Posterior cingulate gyrus (tissue), 11 donors: ENCODE measurements at regions of chr12 and their contacts with region 1.

Region 1: DNA sequence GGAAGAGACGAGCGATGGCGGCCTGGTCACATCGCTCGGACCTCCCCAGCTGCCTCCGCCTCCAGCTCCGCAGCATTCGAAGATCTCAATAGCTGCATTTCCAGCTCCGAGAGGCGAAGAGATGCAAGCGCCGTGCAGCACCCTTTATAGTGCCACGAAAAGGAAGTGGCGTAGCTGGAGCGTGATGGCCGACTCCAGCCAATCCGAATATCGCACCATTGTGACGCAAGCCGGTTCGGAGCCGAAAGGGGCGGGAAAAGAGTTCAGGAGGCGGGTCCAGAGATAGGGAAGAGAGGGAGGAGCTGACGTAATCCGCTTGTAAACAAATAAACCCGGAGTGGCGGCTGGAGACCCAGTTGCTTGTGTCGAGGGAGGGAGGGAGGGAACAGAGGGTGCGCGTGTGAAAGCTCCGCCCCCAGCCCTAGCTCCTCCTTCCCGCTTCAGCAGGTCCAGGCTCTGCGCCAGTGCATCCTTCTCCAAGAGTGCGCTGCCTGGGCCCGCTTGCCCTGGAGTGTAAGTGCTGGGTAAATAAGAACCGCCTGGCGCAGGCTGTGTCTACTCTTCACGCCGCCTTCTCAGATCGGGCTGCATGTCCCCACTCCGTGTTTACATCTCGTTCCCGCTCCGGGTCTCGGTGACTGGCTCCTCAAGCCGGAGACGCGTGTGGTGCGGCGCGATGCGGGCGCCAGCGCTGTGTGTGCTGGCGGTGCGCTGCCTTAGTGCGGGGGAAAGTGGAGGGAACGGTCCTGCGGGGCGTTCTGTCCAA is at the start of gene BTG1:
- DNase-seq: peak; percentile 99 to 100 (median 99)

Region 2: DNA sequence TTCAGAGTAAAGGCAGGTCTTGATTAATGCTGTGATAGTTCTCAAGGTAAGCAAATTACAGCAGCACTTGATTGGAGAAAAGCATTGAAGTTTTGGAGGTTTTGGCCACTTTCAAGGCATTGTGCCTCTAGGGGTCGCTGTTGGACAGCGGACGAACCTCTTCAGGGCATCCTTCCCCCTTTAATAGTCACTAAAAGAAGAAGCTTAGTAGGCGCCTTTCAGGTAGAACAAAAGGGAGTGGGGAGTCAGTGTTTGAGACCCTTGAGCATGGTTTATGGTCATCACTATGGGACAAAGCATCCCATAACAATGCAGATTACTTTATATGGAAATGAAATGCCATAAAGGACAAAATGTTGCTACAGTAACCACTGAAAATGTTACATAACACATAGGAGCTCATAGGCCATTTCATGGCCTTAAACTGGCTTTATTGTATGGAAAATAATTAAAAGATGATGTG is 763.8 kb before region 1 on chr12:
- intact Hi-C with region 1: loop called (anchors 5 kb)
- DNase-seq: peak; percentile 71 to 97 (median 90)

Region 3: DNA sequence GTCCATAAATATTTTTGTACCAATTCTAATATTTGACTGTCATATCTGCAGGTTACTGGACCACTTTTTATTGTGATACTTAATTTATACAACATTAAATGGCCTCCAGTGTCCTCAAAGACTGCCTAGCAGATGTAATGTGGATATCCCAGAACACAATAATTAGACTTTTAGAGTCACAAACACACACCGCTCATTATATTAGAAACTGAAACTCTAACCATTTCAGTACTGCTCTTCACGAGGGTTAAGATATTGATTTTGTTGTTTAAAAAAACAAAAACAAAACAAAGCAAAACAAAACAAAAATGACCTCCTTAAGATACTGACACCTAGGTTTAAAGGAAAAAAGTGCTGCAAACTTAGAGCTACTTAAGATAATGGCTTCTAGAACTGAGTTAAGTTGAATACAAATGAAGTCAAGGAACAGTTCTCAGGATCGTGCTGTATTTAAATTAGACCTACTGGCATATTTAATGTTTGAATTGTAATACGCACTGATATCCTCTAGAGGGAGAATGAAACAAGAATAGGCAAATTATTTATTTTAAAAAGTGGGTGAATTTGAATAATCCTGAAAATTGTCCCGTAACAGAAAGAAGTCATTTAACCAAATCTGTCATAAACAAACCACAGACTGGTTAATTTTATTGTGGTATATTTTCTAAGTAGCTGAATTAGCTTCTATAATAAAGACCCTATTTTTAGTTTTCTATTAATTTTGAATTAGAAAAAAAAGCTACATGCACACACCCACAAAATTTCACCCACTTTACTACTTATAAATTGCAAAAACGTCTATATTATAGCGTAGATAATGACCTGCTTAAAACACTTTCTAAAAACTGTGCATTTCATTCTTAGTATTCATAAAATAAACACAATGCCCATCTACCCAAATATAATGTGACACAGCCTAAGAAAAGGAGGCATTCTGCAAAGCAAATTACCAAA is 568.1 kb before region 1 on chr12:
- intact Hi-C with region 1: loop called (anchors 5 kb)
- DNase-seq: no peak

Region 4: DNA sequence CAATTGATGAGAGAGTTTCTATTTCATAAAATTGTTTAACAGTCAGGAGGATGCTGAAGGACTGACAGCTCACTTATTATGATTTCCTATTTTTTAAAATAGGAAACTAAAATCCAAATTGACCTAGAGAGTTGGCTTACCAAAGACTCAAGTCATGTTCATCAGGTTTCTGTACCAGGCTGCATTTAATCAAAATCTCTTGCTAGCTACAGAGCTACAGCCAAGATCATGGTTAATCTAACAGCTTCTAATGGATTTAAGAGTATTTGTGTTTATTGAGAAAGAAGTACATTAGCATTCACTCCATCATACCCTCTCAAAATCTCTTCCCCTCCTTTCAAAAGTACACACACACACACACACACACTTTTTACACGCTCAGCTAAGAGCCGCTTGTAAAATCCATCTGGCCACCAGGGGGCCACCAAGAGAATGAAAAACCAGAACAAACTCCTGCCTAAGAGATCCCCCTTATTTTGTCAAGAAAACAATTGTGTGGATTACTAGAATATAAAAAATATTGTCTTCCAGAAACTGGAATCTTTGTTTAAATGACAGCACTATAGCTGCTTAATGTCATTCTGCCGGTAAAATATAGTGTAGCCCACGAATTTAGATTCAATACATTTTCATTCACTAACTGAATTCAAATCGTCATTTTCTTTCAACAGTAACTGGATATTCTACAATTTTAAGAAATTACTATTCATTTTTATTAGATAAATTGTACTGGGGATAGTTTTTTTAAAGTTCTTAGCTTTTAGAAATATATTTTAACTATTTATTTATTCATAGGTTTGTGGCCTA is 334.2 kb before region 1 on chr12:
- intact Hi-C with region 1: loop called (anchors 5 kb)
- DNase-seq: peak in 9 of 10 donors; percentile 25 to 90 (median 73)

Region 5: GRCh38 chr12:92034858-92035401 is 111.0 kb before region 1 on chr12:
- intact Hi-C with region 1: loop called (anchors 5 kb)
- DNase-seq: peak; percentile 16 to 88 (median 44)

Region 6: DNA sequence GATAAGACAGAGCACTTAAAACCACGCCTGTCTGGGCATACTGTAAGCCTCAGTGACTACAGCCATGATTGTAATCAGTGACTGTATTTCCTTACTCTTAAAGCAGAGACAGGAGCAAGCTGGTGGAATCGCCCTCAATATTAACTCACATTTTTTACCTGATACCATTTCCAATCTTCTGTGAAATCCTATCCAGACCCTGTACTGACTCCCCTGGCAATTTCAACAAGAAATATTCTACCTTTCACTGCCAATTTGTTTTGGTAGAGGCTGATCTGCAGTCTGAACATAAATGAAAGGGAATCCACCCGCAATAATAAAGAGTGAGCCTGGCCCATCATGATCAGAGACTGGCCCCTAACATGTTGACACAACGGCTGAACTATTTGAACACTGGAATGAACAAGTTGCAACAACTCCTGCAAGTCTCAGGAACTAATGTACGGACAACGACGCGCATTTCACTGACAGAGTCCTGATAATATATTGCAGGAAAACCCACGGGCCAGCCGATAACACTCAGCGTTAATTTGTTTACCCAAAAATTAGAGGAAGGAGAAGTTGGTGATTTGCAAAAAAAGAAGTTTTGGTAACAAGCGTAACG is 195.3 kb after region 1 on chr12:
- intact Hi-C with region 1: no loop called
- DNase-seq: no peak

Region 7: GRCh38 chr12:92570056-92570753 is 424.3 kb after region 1 on chr12:
- intact Hi-C with region 1: loop called (anchors 5 kb)
- DNase-seq: peak in 5 of 10 donors; percentile 19 to 69 (median 31)

Region 8: GRCh38 chr12:92844151-92844763 is 698.3 kb after region 1 on chr12:
- intact Hi-C with region 1: no loop called
- DNase-seq: no peak